A549 (cell line): ENCODE measurements at regions of chr20 and their contacts with region 1.

Region 1: GRCh38 chr20:34876162-34877001 is at the start of gene ACSS2:
- DNase-seq: peak; percentile 85 to 98
- ATAC-seq: peak; percentile 75 to 90
- H3K4me3 ChIP-seq: peak within 1 kb of the TSS; percentile 81
- H3K27ac ChIP-seq: peak within 1 kb of the TSS; percentile 75 to 87
- H3K4me1 ChIP-seq: peaks cover 26% of the 10 kb centered on the region
- CTCF ChIP-seq: no peak
- EP300 ChIP-seq: no peak
- POLR2A ChIP-seq: peak; percentile 64
- RAD21 ChIP-seq: peak in 1 of 2 experiments; percentile 30; a peak in 1 of 5 replicates
- polyA plus RNA-seq, gene ACSS2: 21.4 and 22.1 TPM in 2 replicates

Region 2: DNA sequence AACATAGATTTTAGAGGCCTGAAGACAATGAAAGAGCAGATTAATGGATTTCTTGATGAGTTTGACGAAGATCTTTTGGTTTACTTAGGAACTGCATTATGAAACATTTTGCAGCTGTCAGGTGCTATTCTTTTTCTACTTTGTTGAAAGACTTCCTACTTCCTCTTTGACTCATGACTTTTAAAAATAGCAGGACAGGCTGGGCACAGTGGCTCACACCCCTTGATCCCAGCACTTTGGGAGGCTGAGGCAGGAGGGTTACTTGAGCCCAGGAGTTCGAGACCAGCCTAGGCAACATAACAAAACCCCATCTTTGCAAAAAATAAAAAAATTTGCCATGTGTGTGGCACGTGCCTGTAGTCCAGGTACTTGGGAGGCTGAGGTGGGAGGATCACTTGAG is 461.3 kb before region 1 on chr20:
- CTCF ChIA-PET with region 1: no interaction called
- POLR2A ChIA-PET with region 1: no interaction called
- DNase-seq: no peak
- ATAC-seq: no peak
- H3K4me3 ChIP-seq: no peak overlapping the region
- H3K27ac ChIP-seq: no peak overlapping the region
- H3K4me1 ChIP-seq: peaks cover 38% of the 10 kb centered on the region
- CTCF ChIP-seq: no peak
- EP300 ChIP-seq: no peak
- POLR2A ChIP-seq: no peak
- RAD21 ChIP-seq: no peak

Region 3: DNA sequence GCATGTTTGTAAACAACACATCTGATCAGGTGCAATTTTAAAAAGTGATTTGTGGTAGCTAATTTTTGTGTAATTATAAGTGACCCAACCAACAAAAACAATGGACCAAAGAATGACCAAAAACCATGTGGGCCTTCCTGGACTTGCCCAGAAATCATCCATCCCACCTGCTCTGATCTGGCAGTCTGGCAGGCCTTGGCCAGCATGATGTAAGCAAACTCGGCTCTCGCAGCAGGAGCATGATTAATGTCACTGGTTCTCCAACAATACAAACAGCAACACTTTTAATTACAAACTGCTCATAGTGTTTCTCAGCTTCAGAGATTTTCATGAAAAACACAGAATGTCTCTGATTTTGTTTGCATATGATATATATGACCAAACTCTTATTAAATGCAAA is 156.1 kb before region 1 on chr20:
- CTCF ChIA-PET with region 1: no interaction called
- POLR2A ChIA-PET with region 1: no interaction called
- DNase-seq: no peak
- ATAC-seq: no peak
- H3K4me3 ChIP-seq: no peak overlapping the region
- H3K27ac ChIP-seq: no peak overlapping the region
- H3K4me1 ChIP-seq: no peaks in the 10 kb centered on the region
- CTCF ChIP-seq: no peak
- EP300 ChIP-seq: no peak
- POLR2A ChIP-seq: no peak
- RAD21 ChIP-seq: no peak

Region 4: DNA sequence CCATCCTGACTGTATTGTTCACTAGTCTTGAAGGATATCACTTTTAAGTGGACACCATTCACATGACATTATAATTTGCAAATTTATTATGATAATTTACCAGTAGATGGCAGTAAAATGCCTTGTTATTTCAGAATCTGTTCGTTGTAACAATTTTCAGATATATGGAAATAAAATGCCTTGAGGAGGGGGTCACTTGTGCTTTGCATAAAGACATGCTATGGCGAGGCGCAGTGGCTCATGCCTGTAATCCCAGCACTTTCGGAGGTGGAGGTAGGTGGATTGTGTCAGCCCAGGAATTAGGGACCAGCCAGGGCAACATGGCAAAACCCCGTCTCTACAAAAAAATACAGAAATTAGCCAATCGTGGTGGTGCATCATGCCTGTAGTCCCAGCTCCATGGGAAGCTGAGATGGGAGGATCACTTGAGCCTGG is 41.9 kb before region 1 on chr20:
- CTCF ChIA-PET with region 1: interaction called, 24 read pairs
- POLR2A ChIA-PET with region 1: no interaction called
- DNase-seq: peak; percentile 36 to 46
- ATAC-seq: peak; percentile 81 to 83
- H3K4me3 ChIP-seq: peak overlapping the region; percentile 28; the same call in 1 of the 3 replicates
- H3K27ac ChIP-seq: peak overlapping the region in 1 of 2 experiments; percentile 69; a peak in 2 of 6 replicates
- H3K4me1 ChIP-seq: no peaks in the 10 kb centered on the region
- CTCF ChIP-seq: peak; percentile 67
- EP300 ChIP-seq: no peak
- POLR2A ChIP-seq: no peak
- RAD21 ChIP-seq: peak; percentile 70 to 80

Region 5: DNA sequence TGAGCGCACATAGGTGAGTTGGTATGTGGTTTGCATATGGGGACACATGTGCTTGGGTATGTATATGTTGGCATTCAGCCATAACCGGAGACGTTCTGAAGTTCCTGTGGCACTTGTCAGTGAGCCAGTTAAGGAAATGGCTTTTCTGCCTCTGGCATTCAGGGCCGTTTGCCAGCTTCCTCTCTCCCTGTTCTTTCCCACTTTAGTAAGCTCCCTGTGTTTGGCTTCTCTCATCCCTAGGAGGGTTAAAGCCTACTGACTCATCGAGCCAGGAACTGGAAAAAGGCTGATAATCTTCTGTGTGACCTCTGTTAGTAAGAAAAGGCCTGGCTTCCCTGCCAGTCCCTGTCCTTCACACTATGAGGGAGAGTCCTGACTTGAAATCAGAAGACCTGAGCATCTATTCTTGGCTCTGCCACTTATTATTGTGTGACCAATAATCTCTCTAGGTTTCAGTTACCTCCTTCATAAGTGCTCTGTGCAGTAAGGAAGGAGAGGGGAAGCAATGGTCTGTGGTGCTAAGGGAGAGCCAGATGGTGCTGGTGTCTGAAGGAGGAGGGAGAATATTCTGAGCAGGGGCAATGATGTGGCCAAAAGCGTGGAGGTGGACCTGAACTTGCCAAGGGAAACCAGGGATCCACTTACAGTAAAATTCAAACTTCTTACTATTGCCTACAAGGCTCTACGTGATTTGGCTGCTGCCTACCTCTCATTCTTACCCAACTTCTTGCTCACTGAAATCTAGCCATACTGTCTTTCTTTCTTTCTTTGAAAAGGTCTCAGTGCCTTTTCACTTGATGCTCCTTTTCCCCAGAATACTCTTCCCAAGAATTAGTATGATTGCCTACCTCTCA is 31.5 kb after region 1 on chr20:
- CTCF ChIA-PET with region 1: interaction called, 15 read pairs
- POLR2A ChIA-PET with region 1: interaction called, 3 read pairs
- DNase-seq: peak; percentile 63 to 74
- ATAC-seq: peak; percentile 94 to 96
- H3K4me3 ChIP-seq: no peak overlapping the region
- H3K27ac ChIP-seq: peak overlapping the region; percentile 67 to 83
- H3K4me1 ChIP-seq: peaks cover 20% of the 10 kb centered on the region
- CTCF ChIP-seq: no peak
- EP300 ChIP-seq: peak in 1 of 2 experiments; percentile 35; a peak in 1 of 5 replicates
- POLR2A ChIP-seq: no peak
- RAD21 ChIP-seq: 0 out of 5 replicates have a peak, but pooled peaks of 1 of the 2 experiments have one; percentile 2

Region 6: DNA sequence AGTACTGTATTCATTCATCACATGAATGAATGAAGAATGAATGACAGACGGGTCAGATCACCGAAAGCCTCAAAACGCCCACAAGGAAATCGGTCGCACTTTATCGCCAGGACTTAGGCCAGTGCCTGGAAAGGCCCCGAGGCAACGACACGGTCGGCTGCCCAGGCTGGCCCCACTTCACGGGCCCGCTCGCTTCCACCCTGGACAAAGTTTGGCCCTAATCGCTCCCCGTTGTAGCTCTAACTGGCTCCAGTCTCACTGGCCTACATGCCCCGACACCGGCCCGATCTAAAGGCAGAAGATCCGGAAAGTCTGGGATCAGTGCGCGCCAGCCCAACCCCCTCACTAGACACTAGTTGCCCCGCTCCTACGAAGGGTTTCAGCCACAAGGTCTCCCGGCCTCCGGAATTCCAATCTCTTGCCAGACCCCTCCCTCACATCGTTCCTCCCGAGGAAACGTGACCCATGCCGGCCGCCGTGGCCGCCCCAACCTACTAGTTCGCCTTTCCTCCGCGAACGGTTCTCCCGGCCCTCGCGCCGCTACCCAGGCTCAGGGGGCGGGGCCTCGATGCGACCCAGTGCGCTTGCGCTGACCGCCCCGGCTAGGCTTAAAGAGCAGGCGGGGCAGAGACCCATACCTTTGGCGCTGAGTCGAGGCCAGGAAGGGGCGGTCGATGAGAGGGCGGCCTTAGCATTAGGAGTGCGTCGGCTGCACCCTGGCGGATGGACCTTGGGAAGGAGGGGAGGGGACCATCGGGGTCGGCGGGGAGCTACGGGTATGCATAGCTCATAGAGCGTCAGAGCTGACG is 79.1 kb after region 1 on chr20 and contains the starts of genes GSS and MYH7B:
- CTCF ChIA-PET with region 1: interaction called, 207 read pairs
- POLR2A ChIA-PET with region 1: interaction called, 20 read pairs
- DNase-seq: peak; percentile 96 to 97
- ATAC-seq: peak; percentile 97 to 98
- H3K4me3 ChIP-seq: peak within 1 kb of the TSS; percentile 59
- H3K27ac ChIP-seq: peak within 1 kb of the TSS; percentile 82 to 94
- H3K4me1 ChIP-seq: peaks cover 11% of the 10 kb centered on the region
- CTCF ChIP-seq: peak; percentile 62
- EP300 ChIP-seq: no peak
- POLR2A ChIP-seq: peak; percentile 95
- RAD21 ChIP-seq: peak; percentile 70 to 86
- polyA plus RNA-seq, gene GSS: 92.4 and 107 TPM in 2 replicates
- polyA plus RNA-seq, gene MYH7B: 0.03 and 0.04 TPM in 2 replicates

Region 7: GRCh38 chr20:35001596-35002362 is 125.4 kb after region 1 on chr20:
- CTCF ChIA-PET with region 1: interaction called, 30 read pairs
- POLR2A ChIA-PET with region 1: no interaction called
- DNase-seq: no peak
- ATAC-seq: peak in 1 of 2 experiments; percentile 41; a peak in 3 of 6 replicates
- H3K4me3 ChIP-seq: no peak overlapping the region
- H3K27ac ChIP-seq: no peak overlapping the region
- H3K4me1 ChIP-seq: no peaks in the 10 kb centered on the region
- CTCF ChIP-seq: peak; percentile 25
- EP300 ChIP-seq: no peak
- POLR2A ChIP-seq: no peak
- RAD21 ChIP-seq: peak in 1 of 2 experiments; percentile 26; a peak in 1 of 5 replicates

Region 8: DNA sequence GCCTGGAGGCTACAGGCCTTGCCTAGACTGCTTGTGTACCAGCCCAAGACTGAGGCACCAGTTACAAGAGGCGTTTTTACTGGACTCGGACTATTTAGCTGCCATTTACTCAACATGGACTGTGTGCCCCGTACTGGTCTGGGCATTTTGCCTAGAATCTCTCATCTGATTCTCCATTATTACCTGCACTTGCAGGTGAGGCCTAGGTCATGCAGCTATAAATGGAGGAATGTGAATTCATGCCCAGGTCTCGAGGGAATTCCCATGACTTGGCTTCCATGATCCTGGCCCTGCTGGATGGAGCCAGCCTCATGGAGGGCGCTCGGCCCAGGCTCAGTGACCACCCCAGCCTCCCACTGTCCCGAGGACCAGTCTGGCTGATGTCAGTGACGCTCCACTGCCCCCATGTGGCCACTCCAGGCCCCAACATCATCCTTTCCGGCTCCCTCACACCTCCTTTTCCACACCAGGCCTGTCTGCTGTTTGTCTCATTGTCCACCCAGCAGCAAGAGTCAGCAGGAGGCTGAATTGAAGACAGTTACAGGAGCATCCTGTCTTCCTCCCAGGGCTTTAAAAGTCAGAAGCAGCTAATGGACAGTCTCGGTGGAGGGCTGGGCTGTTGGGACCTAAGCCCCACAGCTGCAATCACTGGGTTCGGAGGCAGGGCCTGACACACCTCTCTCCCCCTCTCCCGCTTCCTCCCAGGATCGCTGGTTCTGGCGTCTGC is 392.8 kb after region 1 on chr20:
- CTCF ChIA-PET with region 1: interaction called, 35 read pairs
- POLR2A ChIA-PET with region 1: interaction called, 3 read pairs
- DNase-seq: peak; percentile 76 to 81
- ATAC-seq: peak; percentile 81 to 84
- H3K4me3 ChIP-seq: no peak overlapping the region
- H3K27ac ChIP-seq: peak overlapping the region; percentile 49 to 97
- H3K4me1 ChIP-seq: peaks cover 71% of the 10 kb centered on the region
- CTCF ChIP-seq: peak; percentile 89
- EP300 ChIP-seq: no peak
- POLR2A ChIP-seq: no peak
- RAD21 ChIP-seq: peak; percentile 96